ENCODE measurements at regions of chr4 and their contacts with region 1.

Region 1: DNA sequence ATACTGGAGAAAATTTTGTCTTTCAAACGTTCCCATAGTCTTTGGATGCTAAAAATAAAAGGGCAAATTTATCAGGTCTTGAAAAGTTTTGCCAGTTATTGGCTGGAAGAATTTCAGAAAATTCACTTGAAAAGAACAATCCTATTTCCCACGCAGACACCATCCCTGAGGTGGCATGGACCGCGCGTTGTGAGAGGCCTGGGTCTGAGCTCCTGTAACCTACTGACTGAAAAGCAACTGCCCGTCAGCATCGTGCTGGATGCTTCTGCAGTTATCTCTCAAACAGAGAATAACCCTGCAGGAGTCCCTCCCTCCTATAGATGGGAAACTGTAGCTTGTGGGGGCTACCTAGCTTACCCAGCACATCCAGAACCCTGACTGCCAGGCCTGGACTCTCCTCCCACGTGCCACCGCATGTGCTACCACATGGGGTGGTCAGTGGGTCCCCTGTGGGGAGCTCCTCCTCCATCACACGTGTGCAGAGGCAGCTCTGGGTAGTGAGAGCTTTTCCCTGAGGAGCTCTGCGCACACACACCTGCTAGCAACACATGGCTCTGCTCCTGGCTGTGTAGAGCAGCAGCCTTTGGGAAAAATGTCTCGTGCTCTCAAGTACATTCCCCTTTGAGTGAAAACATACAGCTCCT is 36.1 kb downstream of the NSG1 start:
- DNase-seq: no peak
- H3K4me3 ChIP-seq: no peak overlapping the region
- CTCF ChIP-seq: no peak

Region 2: GRCh38 chr4:3452376-3452775 is 970.6 kb before region 1 on chr4:
- in situ Hi-C with region 1: no loop called
- DNase-seq: no peak
- H3K4me3 ChIP-seq: no peak overlapping the region
- CTCF ChIP-seq: peak; percentile 29

Region 3: DNA sequence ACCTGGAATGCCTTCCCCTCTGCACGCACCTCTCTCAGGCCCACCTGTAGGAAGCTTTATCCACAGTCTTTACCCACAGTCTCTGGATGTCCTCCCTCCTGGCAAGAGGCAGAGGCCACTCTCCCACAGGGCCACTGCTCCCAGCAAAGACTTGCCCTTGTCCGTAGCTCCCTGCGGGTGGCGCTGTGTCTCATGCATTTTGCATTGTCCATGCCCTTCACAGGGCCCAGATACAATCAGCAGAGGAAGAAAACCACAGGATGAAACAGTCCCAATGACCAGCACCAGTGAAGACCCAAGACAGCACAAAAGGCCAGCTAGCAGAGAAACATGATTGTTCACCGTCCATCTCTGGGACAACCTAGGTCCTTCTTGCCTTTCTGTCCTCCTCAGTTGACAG is 38.1 kb before region 1 on chr4:
- in situ Hi-C with region 1: loop called (anchors 5 kb)
- DNase-seq: no peak
- H3K4me3 ChIP-seq: no peak overlapping the region
- CTCF ChIP-seq: peak; percentile 20

Measured in astrocyte of the cerebellum (primary cell).